BJ (cell line): ENCODE measurements at regions of chr10 and their contacts with region 1.

Region 1: DNA sequence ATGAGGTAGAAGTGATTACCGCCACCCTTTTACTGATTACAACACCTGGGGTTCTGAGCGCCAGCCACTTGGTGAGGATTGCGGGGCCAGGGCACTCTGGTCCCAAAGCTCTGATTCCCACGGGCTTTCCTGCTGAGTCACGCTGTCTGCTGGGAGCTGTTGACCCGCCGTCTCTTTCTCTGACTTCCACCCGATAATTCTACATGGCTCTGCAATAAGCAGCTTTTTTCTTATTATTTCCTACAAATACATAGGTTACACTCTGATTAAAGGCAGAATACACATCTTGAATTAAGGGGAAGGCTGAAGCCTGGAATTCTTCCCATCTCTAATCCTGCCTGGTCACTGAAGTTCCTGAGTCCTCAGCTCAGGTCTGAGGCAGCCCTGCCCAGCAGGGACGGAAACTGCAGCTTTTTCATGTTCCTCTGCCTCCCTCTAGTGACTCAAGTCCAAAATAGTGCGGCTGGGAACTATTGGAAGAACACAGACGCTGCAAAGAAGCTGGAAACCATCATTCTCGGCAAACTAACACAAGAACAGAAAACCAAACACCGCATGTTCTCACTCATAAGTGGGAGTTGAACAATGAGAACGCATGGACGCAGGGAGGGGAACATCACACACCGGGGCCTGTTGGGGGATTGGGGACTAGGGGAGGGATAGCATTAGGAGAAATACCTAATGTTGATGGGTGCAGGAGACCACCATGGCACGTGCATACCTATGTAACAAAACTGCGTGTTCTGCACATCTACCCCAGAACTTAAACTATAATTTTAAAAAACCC is 178.3 kb downstream of the PRKCQ start:
- DNase-seq: peak; percentile 44
- H3K4me3 ChIP-seq: peak overlapping the region; percentile 24; the same call in 1 of the 2 replicates
- H3K27me3 ChIP-seq: peaks cover 2% of the 10 kb centered on the region; the same call in 1 of the 2 replicates
- CTCF ChIP-seq: peak; percentile 74

Region 2: DNA sequence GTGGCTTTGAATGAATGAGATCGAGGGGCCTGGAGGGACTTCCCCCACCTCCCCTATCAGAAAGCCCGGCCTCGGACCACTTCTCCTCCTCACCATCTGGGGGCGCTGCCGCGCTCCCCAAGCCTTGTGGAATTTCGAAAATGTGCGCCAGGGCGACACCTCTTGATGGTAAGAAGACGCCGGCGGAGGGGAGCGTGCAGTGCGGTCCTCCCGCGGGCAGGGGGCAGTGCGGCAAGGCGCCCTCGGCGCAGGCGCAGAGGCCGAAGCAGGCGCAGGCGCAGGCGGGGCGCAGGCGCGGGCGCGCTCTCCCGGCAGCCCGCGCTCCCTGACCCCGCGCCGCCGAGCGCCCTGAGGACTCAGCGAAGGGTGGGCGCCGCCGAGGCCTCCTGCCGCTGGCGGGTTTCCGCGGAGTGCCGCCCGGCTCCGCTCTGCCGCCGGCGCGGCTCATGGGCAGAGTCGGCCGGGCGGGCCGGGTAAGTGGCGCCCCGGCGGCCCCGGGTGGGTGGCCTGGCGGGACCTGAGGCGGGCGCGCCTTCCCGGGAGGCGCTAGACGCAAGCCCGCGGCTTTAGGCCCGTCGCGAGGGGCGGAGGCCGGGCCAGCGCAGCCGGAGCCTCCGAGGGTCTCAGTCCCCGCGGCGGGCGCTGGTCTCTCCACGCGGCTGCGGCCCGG is 312.9 kb before region 1 on chr10 and contains the start of gene RBM17:
- CTCF ChIA-PET with region 1: interaction called, 26 read pairs
- POLR2A ChIA-PET with region 1: no interaction called
- DNase-seq: peak; percentile 75
- H3K4me3 ChIP-seq: peak within 1 kb of the TSS; percentile 92
- H3K27me3 ChIP-seq: 0 out of 2 replicates have a peak, but pooled peaks cover 3% of the 10 kb centered on the region
- CTCF ChIP-seq: peak; percentile 100
- polyA plus RNA-seq, gene RBM17: 28.9 and 31.7 TPM in 2 replicates

Region 3: GRCh38 chr10:6108603-6109443 is 292.9 kb before region 1 on chr10:
- CTCF ChIA-PET with region 1: interaction called, 37 read pairs
- POLR2A ChIA-PET with region 1: no interaction called
- DNase-seq: no peak
- H3K4me3 ChIP-seq: no peak overlapping the region
- H3K27me3 ChIP-seq: no peaks in the 10 kb centered on the region
- CTCF ChIP-seq: peak; percentile 64

Region 4: DNA sequence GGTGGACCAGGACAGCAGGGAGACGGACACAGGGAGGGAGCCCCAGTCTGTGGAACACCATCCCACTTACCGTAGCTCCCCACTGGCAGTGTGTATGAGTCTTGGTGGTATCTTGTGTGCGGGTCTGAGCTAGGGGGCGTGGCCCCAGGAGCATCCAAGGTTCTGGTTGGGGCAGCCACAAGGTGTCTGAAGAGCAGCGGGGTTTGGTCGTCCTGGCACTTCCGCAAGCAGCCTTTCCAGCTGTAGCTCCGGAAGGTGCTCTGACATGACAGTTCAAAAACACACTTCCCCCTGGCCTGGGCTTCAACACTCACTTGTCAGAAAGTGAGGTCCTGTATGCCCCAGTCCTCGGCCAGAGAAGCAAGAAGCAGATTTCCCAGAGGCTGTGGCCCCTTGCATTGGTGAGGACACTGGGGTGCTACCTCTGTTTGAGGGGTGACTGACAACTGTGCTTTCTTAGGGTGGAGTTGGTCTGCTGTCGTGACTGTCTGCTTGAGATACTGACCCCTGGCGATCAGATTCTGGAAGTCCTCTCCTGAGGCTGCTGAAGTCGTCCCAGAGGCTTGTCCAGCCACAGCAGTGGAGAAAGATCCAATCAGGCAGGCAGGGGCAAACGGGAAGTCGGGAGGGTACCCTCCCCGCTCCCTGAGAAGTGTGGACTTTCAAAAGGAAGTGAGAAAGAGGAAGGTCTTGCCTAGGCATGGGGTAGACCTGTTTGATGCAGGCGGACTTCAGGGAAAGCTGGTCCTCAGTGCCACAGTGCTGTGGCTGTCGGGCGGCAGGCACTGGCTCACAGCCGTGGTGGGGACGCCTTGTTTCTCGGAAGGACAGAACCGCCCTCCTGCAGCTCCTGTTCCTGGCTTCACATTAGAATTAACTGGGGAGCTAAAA is 250.4 kb before region 1 on chr10:
- CTCF ChIA-PET with region 1: interaction called, 12 read pairs
- POLR2A ChIA-PET with region 1: no interaction called
- DNase-seq: no peak
- H3K4me3 ChIP-seq: no peak overlapping the region
- H3K27me3 ChIP-seq: no peaks in the 10 kb centered on the region
- CTCF ChIP-seq: peak; percentile 80

Region 5: GRCh38 chr10:6211671-6212635 is 189.8 kb before region 1 on chr10:
- CTCF ChIA-PET with region 1: interaction called, 10 read pairs
- POLR2A ChIA-PET with region 1: no interaction called
- DNase-seq: no peak
- H3K4me3 ChIP-seq: no peak overlapping the region
- H3K27me3 ChIP-seq: no peaks in the 10 kb centered on the region
- CTCF ChIP-seq: no peak

Region 6: DNA sequence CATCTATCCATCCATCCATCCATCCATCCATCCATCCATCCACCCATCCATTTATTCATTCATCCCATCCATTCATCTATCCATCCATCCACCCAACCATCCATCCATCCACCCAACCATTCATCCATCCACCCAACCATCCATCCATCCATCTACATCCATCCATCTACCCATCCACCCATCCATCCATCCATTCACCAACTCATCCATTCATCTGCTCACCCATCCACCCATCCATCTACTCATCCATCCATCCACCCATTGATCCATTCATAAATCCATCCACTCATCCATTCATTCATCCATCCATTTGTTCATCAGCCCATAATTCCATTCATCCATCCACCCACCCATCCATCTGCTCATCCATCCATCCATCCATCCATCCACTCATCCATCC is 142.6 kb before region 1 on chr10:
- CTCF ChIA-PET with region 1: no interaction called
- POLR2A ChIA-PET with region 1: no interaction called
- DNase-seq: no peak
- H3K4me3 ChIP-seq: no peak overlapping the region
- H3K27me3 ChIP-seq: no peaks in the 10 kb centered on the region
- CTCF ChIP-seq: no peak